ENCODE measurements at regions of chr17 and their contacts with region 1.

Region 1: DNA sequence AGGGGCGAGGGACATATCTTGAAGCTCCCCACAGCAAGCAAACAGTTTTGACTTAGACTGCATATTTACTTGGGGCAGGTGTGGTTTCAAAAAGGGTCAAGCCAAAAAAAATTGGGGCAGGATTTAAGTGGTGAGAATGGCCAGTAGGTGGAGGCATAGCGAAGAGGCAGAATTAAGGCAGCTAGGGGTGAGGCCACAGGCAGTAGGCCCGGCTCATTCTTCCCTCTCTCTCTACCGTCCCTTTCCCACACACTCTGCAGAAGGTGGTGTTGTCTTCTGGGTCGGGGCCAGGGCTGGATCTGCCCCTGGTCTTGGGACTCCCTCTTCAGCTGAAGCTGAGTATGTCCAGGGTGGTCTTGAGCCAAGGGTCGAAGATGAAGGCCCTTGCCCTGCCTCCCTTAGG is 2.6 kb downstream of the SHBG start:
- DNase-seq: peak; percentile 59
- ATAC-seq: peak; percentile 46
- H3K4me3 Mint-ChIP-seq: no peak overlapping the region
- H3K27ac Mint-ChIP-seq: no peak overlapping the region
- H3K4me1 Mint-ChIP-seq: peaks cover 2% of the 10 kb centered on the region
- H3K27me3 Mint-ChIP-seq: no peaks in the 10 kb centered on the region

Region 2: DNA sequence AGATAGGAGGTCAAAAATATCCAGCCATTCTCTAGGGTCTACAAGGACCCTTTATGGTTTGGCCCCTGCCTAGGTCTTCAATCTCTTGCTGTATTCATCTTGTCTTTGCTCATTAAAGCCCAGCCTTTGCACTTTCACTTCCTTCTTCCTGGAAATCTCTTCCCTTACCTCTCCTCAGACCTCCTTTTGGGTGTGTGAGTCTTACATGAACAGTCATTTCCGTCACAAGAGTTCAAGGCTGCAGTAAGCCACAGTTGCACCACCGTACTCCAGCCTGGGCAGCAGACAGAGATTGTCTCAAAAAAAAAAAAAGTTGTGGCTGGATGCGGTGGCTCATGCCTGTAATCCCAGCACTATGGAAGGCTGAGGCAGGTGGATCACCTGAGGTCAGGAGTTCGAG is 12.3 kb after region 1 on chr17:
- CTCF ChIA-PET with region 1: interaction called, 20 read pairs
- POLR2A ChIA-PET with region 1: interaction called, 3 read pairs
- intact Hi-C with region 1: no loop called
- DNase-seq: peak; percentile 18
- ATAC-seq: peak; percentile 79
- H3K4me3 Mint-ChIP-seq: no peak overlapping the region
- H3K27ac Mint-ChIP-seq: no peak overlapping the region
- H3K4me1 Mint-ChIP-seq: peaks cover 10% of the 10 kb centered on the region
- H3K27me3 Mint-ChIP-seq: peaks cover 12% of the 10 kb centered on the region

Region 3: DNA sequence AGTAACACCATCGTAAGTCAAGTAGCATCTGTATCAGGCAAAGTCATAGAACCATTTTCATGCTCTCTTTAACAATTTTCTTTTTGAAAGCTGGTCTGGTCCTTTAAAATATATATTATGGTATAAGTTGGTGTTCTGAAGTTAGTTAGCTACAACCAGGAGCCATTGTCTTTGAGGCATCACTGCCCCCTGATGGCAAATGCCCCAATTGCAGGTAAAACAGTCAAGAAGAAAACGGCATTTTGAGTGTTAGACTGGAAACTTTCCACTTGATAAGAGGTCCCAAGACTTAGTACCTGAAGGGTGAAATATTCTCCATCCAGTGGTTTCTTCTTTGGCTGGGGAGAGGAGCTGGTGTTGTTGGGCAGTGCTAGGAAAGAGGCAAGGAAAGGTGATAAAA is 40.7 kb after region 1 on chr17:
- CTCF ChIA-PET with region 1: interaction called, 12 read pairs
- POLR2A ChIA-PET with region 1: no interaction called
- intact Hi-C with region 1: loop called in 1 of 2 experiments (anchors 5 kb)
- DNase-seq: peak; percentile 73
- ATAC-seq: no peak
- H3K4me3 Mint-ChIP-seq: no peak overlapping the region
- H3K27ac Mint-ChIP-seq: no peak overlapping the region
- H3K4me1 Mint-ChIP-seq: no peaks in the 10 kb centered on the region
- H3K27me3 Mint-ChIP-seq: no peaks in the 10 kb centered on the region

Region 4: GRCh38 chr17:7717756-7718350 is 85.4 kb after region 1 on chr17:
- CTCF ChIA-PET with region 1: interaction called, 3 read pairs
- POLR2A ChIA-PET with region 1: no interaction called
- intact Hi-C with region 1: loop called in 1 of 2 experiments (anchors 1 kb)
- DNase-seq: peak; percentile 50
- ATAC-seq: peak; percentile 47
- H3K4me3 Mint-ChIP-seq: peak overlapping the region; percentile 61
- H3K27ac Mint-ChIP-seq: no peak overlapping the region
- H3K4me1 Mint-ChIP-seq: peaks cover 11% of the 10 kb centered on the region
- H3K27me3 Mint-ChIP-seq: peaks cover 59% of the 10 kb centered on the region

Region 5: DNA sequence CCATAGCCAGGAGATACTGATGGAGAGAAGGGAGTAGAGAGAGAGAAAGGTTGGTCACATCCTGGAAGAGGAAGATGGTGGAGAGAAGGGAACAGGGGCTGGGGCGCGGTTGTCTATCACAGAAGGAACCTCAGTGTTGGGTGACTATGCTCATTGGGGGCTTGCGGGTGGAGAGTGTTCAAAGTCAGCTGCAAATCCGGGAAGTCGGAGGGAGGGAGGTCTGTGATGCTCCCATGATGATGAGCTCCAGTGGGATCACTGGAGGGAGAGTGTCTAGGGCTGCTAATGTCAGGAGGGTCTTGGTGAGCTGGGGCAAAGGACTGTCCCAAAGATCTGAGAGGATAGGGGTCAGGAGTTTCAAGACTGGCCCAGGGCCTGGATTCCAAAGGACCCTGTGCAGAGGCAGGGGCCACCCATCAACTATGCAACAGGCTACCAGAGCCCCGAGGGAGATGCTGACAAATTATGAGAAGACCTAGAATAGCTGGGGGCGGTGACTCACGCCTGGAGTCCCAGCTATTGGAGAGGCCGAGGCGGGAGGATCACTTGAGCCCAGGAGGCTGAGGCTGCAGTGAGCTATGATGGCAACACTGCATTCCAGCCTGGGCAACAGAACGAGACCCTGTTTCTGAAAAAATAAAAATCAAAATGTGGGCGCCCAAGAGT is 1123.2 kb after region 1 on chr17:
- CTCF ChIA-PET with region 1: no interaction called
- POLR2A ChIA-PET with region 1: no interaction called
- intact Hi-C with region 1: no loop called
- DNase-seq: no peak
- ATAC-seq: no peak
- H3K4me3 Mint-ChIP-seq: no peak overlapping the region
- H3K27ac Mint-ChIP-seq: no peak overlapping the region
- H3K4me1 Mint-ChIP-seq: no peaks in the 10 kb centered on the region
- H3K27me3 Mint-ChIP-seq: peaks cover 15% of the 10 kb centered on the region

Measured in activated CD4-positive, alpha-beta T cell treated with anti-CD3 and anti-CD28 coated beads for 36 hours (primary cell).